PC-9 (cell line): ENCODE measurements at regions of chr9 and their contacts with region 1.

Region 1: DNA sequence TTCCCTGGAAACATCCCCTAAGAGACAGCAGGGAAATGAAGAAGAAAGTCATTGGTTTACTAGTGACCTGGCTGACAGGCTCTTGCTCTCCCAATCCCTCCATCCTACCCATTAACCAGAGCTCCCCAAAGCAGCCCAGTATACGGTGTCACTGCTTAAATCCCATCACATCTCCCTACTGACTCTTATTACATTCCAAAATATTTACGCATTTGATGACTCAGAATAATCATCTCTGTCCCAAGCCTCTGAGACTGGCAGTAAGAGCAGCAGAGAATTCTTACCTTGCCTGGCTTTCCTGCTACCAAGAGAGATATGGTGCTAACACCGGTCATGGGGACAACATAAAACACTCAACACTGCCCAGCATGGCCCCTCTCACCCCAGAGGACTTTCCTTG is 20.2 kb upstream of the WHRN start:
- DNase-seq: peak in 1 of 2 experiments; percentile 73
- H3K4me3 ChIP-seq: no peak overlapping the region
- H3K27ac ChIP-seq: no peak overlapping the region
- H3K4me1 ChIP-seq: no peaks in the 10 kb centered on the region; the same call in 1 of the 2 replicates
- H3K27me3 ChIP-seq: no peaks in the 10 kb centered on the region
- CTCF ChIP-seq: no peak

Region 2: DNA sequence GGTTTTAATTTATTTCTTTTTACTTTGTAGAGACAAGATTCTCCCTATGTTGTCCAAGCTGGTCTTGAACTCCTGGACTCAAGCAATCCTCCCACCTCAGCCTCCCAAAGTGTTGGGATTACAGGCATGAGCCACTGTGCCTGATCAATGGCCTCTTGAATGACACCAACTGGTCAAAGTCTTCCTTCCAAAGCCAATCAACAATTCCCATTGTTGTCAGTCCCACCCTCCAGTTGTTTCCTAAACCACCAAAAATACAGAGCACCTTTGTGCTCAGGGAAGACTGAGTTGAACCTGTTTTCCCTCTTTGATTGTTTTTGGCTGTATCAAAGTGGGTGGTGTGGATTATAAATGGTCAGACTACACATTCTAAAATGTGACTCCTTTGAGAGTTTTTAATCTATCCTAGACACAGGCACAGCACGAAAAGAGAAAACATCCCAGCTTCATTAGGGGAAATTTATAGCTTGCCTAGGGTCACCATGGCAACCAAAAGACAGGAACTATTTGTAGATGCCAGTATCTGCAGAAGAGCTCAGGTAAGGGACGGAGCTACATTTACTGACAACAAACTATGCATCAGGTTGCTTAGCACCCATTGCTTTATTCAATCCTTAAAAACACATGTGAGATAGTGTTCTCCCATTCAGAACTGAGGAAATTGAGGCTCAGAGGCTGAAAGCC is 34.5 kb after region 1 on chr9:
- CTCF ChIA-PET with region 1: no interaction called
- POLR2A ChIA-PET with region 1: interaction called, 15 read pairs
- intact Hi-C with region 1: no loop called
- DNase-seq: no peak
- H3K4me3 ChIP-seq: no peak overlapping the region
- H3K27ac ChIP-seq: no peak overlapping the region
- H3K4me1 ChIP-seq: peaks cover 16% of the 10 kb centered on the region
- H3K27me3 ChIP-seq: no peaks in the 10 kb centered on the region
- CTCF ChIP-seq: no peak